Activated T-helper 2 cell treated with anti-CD3 and anti-CD28 coated beads, Interferon-gamma antibody, Interleukin-2, Interleukin-4, amounts not matched to agents 10 μg/mL and 5 μg/mL and 100 μg/mL, durations not matched to agents 14 hours and 24 hours and 36 hours (primary cell): ENCODE measurements at regions of chr3 and their contacts with region 1.

Region 1: GRCh38 chr3:130870423-130870822 is 23.5 kb upstream of the ATP2C1 start:
- DNase-seq: no peak
- H3K4me3 Mint-ChIP-seq: no peak overlapping the region
- H3K27ac Mint-ChIP-seq: no peak overlapping the region
- H3K4me1 Mint-ChIP-seq: no peaks in the 10 kb centered on the region
- H3K27me3 Mint-ChIP-seq: peaks cover 12% of the 10 kb centered on the region

Region 2: GRCh38 chr3:130820976-130821375 is 49.4 kb before region 1 on chr3:
- intact Hi-C with region 1: no loop called
- DNase-seq: no peak
- H3K4me3 Mint-ChIP-seq: no peak overlapping the region
- H3K27ac Mint-ChIP-seq: no peak overlapping the region
- H3K4me1 Mint-ChIP-seq: no peaks in the 10 kb centered on the region
- H3K27me3 Mint-ChIP-seq: peaks cover 49% of the 10 kb centered on the region

Region 3: GRCh38 chr3:130843441-130843840 is 27.0 kb before region 1 on chr3:
- intact Hi-C with region 1: loop called (anchors 1 kb)
- DNase-seq: no peak
- H3K4me3 Mint-ChIP-seq: no peak overlapping the region
- H3K27ac Mint-ChIP-seq: no peak overlapping the region
- H3K4me1 Mint-ChIP-seq: peaks cover 2% of the 10 kb centered on the region
- H3K27me3 Mint-ChIP-seq: peaks cover 10% of the 10 kb centered on the region